PC-9 (cell line): ENCODE measurements at regions of chrX and their contacts with region 1.

Region 1: GRCh38 chrX:17098516-17099247 is 152.2 kb downstream of the REPS2 start:
- DNase-seq: no peak
- H3K4me3 ChIP-seq: no peak overlapping the region
- H3K27ac ChIP-seq: no peak overlapping the region
- H3K4me1 ChIP-seq: no peaks in the 10 kb centered on the region
- H3K27me3 ChIP-seq: no peaks in the 10 kb centered on the region
- CTCF ChIP-seq: no peak

Region 2: GRCh38 chrX:16882702-16883486 is 215.8 kb before region 1 on chrX:
- CTCF ChIA-PET with region 1: no interaction called
- POLR2A ChIA-PET with region 1: no interaction called
- intact Hi-C with region 1: no loop called
- DNase-seq: peak; percentile 56 to 65
- H3K4me3 ChIP-seq: peak overlapping the region; percentile 70
- H3K27ac ChIP-seq: peak overlapping the region; percentile 71
- H3K4me1 ChIP-seq: 0 out of 2 replicates have a peak, but pooled peaks cover 4% of the 10 kb centered on the region
- H3K27me3 ChIP-seq: no peaks in the 10 kb centered on the region
- CTCF ChIP-seq: peak; percentile 83

Region 3: DNA sequence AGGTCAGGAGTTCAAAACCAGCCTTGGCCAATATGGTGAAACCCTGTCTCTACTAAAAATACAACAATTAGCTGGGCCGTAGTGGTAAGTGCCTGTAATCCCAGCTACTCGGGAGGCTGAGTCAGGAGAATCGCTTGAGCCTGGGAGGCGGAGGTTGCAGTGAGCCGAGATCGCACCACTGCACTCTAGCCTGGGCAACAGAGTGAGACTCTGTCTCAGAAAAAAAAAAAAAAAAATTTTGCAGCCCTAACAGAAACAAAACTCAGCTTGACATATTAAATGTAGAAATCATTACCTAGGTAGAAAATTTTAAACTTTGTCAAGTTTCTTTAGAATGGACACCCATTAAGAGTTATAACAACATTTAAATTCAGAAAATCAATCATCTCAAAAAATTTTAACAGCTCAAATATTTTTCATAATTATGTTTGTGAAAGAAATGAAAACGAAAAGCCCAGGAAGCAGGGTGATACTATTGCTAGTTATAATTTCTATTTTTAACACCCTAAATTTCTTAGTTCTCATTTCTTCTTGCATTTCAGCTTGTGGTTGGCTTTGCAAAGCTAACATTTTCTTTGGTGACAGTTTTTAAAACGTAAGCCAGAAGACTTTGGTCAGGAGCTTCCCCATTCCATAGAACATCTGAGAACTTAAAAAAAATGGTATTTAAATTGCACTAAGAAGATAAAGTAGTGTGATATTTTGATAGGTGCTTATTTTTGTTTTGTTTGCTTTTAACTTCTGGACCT is 195.2 kb before region 1 on chrX:
- CTCF ChIA-PET with region 1: no interaction called
- POLR2A ChIA-PET with region 1: interaction called, 24 read pairs
- intact Hi-C with region 1: no loop called
- DNase-seq: no peak
- H3K4me3 ChIP-seq: no peak overlapping the region
- H3K27ac ChIP-seq: no peak overlapping the region
- H3K4me1 ChIP-seq: no peaks in the 10 kb centered on the region
- H3K27me3 ChIP-seq: no peaks in the 10 kb centered on the region
- CTCF ChIP-seq: no peak